GM23248 (cell line): ENCODE measurements at regions of chr3 and their contacts with region 1.

Region 1: GRCh38 chr3:130759699-130760338 is 13.2 kb upstream of the PIK3R4 start:
- DNase-seq: peak; percentile 80
- H3K4me3 ChIP-seq: no peak overlapping the region
- H3K27ac ChIP-seq: no peak overlapping the region
- H3K4me1 ChIP-seq: peaks cover 11% of the 10 kb centered on the region
- H3K27me3 ChIP-seq: no peaks in the 10 kb centered on the region; the same call in 1 of the 2 replicates

Region 2: DNA sequence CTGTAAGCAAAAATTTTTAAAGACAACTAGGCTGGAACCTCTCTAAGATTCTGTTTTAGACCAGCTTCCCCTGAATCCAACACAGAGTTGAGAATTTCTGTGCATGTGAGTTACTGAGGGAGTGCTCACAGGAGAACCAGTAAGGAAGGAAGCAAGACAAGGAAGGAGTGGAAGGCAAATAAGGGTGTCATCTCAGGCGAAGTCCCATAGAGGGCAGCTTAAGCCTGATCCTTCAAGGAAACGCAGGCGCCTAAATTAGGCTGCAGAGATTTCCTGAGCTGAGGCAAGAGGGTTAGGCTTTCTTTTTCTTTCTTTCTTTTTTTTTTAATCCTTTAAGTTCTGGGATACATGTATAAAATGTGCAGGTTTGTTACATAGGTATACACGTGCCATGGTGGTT is 279.1 kb before region 1 on chr3:
- in situ Hi-C with region 1: no loop called
- DNase-seq: peak; percentile 80
- H3K4me3 ChIP-seq: no peak overlapping the region
- H3K27ac ChIP-seq: no peak overlapping the region
- H3K4me1 ChIP-seq: no peaks in the 10 kb centered on the region
- H3K27me3 ChIP-seq: no peaks in the 10 kb centered on the region

Region 3: DNA sequence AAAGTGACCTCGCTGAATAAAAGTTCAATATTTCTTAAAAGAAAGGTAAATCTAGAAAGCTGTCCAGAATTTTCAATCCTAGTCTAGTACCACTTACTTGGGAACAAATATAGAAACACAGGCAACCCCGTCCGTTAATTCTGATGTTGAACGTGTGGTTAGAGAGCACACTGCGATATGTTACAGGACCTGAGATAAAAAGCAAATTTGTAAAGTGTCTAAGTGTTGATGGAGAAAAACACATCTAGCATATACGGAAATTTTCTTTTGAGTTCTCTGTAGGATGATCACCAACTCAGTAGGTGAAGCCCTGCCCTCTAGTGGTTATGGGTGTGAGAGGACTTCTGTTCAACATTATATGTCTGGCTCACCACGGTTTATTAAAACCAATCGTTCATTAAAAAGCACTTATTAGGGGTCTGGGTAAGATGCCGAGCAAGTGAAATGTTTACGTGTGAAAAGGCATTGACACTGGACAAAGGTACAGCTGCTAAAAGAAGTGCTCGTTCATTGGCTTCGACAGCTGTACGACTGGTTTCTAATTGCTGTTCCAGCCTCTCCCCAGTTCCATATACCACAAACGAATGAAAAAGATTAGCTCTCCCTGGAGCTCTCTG is 133.0 kb after region 1 on chr3:
- in situ Hi-C with region 1: loop called (anchors 10 kb)
- DNase-seq: peak; percentile 89
- H3K4me3 ChIP-seq: peak overlapping the region; percentile 92
- H3K27ac ChIP-seq: peak overlapping the region; percentile 89
- H3K4me1 ChIP-seq: peaks cover 23% of the 10 kb centered on the region
- H3K27me3 ChIP-seq: no peaks in the 10 kb centered on the region